ENCODE measurements at regions of chr2 and their contacts with region 1.

Region 1: GRCh38 chr2:17851731-17852585 is 26.5 kb upstream of the KCNS3 start:
- DNase-seq: peak; percentile 11
- H3K4me3 Mint-ChIP-seq: no peak overlapping the region
- H3K27ac Mint-ChIP-seq: no peak overlapping the region
- H3K4me1 Mint-ChIP-seq: no peaks in the 10 kb centered on the region
- H3K27me3 Mint-ChIP-seq: peaks cover 2% of the 10 kb centered on the region

Region 2: GRCh38 chr2:17729880-17730279 is 122.1 kb before region 1 on chr2:
- intact Hi-C with region 1: no loop called
- DNase-seq: no peak
- H3K4me3 Mint-ChIP-seq: no peak overlapping the region
- H3K27ac Mint-ChIP-seq: no peak overlapping the region
- H3K4me1 Mint-ChIP-seq: no peaks in the 10 kb centered on the region
- H3K27me3 Mint-ChIP-seq: no peaks in the 10 kb centered on the region

Region 3: DNA sequence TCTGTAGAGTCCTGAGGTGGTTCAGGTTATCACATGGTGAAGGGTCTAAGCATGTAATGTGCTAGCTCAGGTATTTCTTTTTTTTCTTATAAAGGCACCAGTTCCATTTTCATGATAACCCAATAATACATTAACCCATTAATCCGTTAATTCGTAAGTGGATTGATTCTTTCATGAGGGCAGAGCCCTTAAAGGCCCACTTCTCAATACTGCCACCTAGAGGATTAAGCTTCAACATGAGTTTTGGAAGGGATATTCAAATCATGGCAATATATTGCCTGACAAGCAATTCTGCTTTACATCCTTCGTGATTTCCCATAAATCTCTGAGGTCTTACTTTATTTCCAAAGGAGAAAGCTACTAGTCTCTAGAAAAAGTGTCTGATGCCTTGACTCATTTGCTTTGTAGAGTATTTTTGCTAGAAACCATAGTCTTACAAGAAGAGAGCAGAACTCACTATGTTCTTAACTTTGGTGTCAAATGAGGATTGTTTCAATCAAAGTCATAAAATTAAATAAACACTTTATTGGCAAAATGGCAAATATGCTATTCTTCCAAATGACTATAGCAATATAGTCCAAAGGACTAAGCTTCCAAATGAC is 297.8 kb after region 1 on chr2:
- intact Hi-C with region 1: loop called (anchors 5 kb)
- DNase-seq: no peak
- H3K4me3 Mint-ChIP-seq: no peak overlapping the region
- H3K27ac Mint-ChIP-seq: no peak overlapping the region
- H3K4me1 Mint-ChIP-seq: no peaks in the 10 kb centered on the region
- H3K27me3 Mint-ChIP-seq: peaks cover 4% of the 10 kb centered on the region

Region 4: GRCh38 chr2:18378020-18378653 is 526.2 kb after region 1 on chr2:
- intact Hi-C with region 1: loop called (anchors 10 kb)
- DNase-seq: no peak
- H3K4me3 Mint-ChIP-seq: no peak overlapping the region
- H3K27ac Mint-ChIP-seq: no peak overlapping the region
- H3K4me1 Mint-ChIP-seq: no peaks in the 10 kb centered on the region
- H3K27me3 Mint-ChIP-seq: peaks cover 4% of the 10 kb centered on the region